ENCODE measurements at regions of chr10 and their contacts with region 1.

Region 1: DNA sequence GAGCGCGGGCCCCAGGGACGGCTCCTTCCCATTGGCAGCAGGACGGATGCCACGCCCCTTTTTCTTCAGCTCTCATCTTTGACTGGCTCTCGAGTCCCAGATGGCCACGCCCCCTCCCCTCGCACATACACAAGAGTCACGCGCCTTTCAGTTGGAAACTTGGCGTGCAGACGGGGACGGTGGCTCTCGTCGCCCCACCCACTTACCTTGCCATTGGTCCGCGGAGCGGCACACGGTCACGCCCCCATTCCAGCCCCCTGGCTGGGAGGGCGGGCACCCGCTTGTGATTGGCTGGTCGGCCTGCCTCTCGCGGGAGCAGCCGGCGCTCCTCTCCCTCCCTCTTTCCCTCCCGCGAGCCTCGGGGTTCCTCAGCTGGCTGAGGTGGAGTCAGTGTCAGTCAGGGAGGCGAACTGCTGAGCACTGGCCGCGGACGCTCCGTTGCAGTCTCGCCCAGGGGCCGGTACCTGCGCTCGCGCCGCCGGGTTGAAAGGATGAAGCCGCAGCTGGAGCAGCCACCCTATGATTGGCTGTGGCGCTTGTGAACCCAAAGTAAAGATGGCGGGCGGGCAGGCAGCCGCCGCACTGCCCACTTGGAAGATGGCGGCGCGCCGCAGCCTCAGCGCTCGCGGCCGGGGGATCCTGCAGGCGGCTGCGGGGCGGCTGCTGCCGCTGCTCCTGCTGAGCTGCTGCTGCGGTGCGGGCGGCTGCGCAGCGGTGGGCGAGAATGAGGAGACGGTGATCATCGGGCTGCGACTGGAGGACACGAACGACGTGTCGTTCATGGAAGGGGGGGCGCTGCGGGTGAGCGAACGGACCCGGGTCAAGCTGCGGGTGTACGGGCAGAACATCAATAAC is at the start of gene CNNM2:
- DNase-seq: peak; percentile 100
- H3K4me3 ChIP-seq: peak within 1 kb of the TSS; percentile 96
- H3K27ac ChIP-seq: peak within 1 kb of the TSS; percentile 93
- H3K27me3 ChIP-seq: no peaks in the 10 kb centered on the region
- CTCF ChIP-seq: no peak; the same call in 1 of the 2 replicates
- polyA plus RNA-seq, gene CNNM2: 5.2 and 5.8 TPM in 2 replicates

Region 2: GRCh38 chr10:102904346-102904745 is 13.8 kb before region 1 on chr10:
- CTCF ChIA-PET with region 1: interaction called, 43 read pairs
- POLR2A ChIA-PET with region 1: no interaction called
- DNase-seq: no peak
- H3K4me3 ChIP-seq: no peak overlapping the region
- H3K27ac ChIP-seq: no peak overlapping the region
- H3K27me3 ChIP-seq: no peaks in the 10 kb centered on the region
- CTCF ChIP-seq: no peak

Region 3: DNA sequence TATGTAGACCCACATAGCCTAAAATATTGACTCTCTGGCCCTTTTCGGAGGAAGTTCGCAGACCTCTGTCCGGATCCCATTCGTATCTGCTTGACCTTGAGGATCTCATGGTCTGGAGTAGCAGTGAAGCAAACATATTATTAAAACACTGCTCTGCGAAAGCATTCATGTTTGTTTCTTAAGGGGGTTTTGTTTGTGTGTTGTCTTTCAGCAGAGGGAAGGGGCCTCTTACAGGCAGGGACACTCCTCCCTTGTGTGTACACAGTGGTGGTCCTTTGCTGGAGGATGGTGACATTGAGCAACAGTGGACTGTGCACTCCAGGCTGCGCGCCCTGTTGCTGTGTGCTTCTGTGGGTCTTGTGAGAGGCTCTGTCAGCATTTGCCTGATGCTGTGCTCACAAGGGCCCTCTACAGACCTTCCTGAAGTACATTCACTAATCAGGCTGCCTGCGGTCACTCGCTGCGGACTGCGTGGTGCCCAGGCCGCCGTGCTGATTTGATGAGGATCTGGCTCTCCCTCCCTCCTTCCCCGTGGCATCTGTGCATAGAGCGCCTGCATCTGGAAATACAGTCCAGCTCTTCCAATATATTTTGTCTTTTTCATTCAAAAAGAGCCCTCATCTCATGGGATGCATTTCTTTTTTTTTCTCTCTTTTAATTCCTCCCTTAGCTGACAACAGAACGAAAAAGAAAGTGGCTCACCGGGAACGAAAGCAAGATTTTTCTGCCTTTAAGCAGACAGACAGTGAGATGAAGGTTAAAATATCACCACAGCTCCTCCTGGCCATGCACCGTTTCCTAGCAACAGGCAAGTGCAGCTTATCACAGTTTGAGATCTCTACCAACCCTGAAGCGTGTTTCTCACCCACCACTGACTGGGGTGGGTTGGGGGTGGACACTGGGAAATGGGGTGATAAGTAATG is 135.7 kb after region 1 on chr10:
- CTCF ChIA-PET with region 1: interaction called, 10 read pairs
- POLR2A ChIA-PET with region 1: interaction called, 4 read pairs
- DNase-seq: peak; percentile 45
- H3K4me3 ChIP-seq: peak overlapping the region; percentile 44
- H3K27ac ChIP-seq: peak overlapping the region; percentile 39
- H3K27me3 ChIP-seq: no peaks in the 10 kb centered on the region
- CTCF ChIP-seq: peak; percentile 63

Region 4: DNA sequence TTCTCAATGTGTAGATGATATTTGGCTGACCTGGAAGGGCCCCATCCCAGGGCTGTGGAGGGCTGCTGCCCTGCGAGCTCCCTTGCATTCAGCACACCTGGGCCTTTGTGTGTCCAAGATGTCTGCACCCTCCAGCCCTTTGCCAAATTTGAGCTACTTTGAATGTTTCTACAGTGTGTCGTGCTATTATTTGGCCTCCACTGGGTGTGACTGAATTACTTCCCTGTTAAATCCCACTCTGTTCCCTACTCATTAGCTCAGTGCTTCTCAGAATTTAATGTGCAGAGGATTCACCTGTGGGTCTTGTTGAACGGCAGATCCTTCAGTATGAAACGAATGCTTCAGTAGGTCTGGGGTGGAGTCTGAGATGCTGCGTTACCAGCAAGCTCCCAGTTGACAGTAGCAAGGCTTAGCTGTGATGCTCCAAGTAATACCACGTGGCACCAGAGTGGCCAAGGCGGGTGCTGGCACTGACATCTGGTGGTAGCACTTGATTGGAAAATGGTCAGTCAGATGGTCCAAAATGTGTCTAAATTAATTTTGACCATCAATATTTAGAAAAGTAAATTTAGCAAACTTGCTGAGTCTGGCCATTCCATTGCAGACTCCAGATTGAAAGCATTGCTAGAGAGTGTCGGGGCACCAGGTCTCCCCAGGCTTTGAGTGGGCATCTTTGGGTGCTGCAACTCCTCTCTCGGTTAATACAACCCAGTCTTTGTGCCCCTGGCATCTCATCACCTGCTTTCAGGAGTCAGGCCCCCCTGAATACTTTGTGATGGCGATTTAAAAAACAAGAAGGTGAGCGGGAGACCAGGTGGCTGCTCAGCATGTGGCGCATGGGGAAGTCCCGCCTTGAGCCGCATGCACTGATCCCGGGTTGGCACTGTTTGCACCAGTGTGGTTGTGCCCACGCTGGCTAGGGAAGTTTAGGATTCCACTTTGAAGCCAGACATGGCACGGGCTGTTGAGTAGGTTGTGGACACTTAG is 144.7 kb after region 1 on chr10:
- CTCF ChIA-PET with region 1: interaction called, 46 read pairs
- POLR2A ChIA-PET with region 1: interaction called, 4 read pairs
- DNase-seq: no peak
- H3K4me3 ChIP-seq: no peak overlapping the region
- H3K27ac ChIP-seq: no peak overlapping the region
- H3K27me3 ChIP-seq: no peaks in the 10 kb centered on the region
- CTCF ChIP-seq: peak; percentile 30

Region 5: DNA sequence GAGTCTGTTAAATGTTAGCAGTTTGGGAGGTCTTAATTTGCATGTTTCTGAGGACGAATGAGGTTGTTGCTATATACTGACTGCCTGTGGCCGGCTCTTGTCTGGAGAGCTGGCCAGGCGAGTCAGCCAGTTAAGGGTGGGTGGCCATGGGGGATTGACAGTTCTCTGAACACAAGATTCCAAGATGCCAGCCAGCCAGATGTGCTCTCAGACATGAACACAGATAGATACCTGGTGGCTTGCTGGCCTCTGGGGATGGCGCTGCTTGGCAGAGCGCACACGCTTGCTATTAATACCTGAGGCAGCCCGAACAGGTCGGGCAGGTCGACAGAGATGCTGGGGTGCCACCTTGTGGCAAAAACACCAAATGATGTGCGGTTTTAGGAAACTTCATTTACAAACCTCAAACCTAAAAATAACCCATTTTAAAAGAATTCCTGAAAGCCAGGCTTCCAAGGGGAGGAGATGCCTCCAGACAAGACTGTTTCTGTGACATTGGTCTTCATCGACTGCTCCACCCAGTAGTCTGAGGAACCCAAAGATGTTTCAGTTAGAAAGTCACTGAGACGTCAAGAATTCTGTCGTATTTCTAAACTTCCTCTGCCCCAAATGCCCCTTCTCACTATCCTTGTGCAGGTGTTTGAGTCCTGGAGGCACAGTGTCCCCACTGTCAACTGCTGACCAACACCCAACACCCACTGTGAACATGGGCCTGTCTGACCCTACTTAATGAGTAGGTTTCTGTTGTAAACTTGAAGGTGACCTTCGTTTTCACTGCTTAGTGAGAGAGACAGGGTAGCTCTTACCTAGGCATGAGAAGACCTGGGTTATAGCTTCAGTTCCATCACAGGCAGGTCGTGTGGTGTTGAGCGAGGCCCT is 151.5 kb after region 1 on chr10:
- CTCF ChIA-PET with region 1: interaction called, 46 read pairs
- POLR2A ChIA-PET with region 1: no interaction called
- DNase-seq: no peak
- H3K4me3 ChIP-seq: no peak overlapping the region
- H3K27ac ChIP-seq: no peak overlapping the region
- H3K27me3 ChIP-seq: no peaks in the 10 kb centered on the region
- CTCF ChIP-seq: peak; percentile 74

Region 6: DNA sequence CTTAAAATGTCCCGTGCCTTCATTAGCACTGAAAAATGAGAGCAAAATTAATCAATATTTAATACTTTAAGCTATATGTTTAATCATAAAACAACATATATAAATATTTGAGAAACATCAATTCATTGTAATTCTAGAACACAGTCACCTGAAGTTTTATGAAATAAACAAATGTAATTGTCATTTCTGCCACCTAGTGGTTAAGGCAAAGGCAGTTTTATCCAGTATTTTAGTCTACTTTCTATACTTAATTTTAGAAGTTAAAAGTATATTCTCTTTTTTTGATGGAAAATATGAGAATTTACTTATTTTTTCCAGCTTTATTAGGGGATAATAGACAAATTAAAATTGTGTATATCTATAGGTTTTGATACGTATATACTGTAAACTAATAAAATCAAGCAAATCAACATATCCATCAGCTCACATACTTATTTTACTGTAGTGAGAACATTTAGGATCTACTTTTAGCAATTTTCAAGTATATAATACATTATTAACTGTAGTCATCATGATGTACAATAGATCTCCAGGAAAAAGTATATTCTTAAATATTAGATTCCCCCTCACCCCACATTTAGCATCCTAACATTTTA is 415.8 kb after region 1 on chr10:
- CTCF ChIA-PET with region 1: interaction called, 10 read pairs
- POLR2A ChIA-PET with region 1: no interaction called
- DNase-seq: no peak
- H3K4me3 ChIP-seq: no peak overlapping the region
- H3K27ac ChIP-seq: no peak overlapping the region
- H3K27me3 ChIP-seq: no peaks in the 10 kb centered on the region
- CTCF ChIP-seq: peak; percentile 65

Measured in AG04450 (cell line).